MCF 10A (cell line): ENCODE measurements at regions of chr17 and their contacts with region 1.

Region 1: GRCh38 chr17:28661635-28662537 is at the starts of genes SDF2 and SUPT6H:
- DNase-seq: peak; percentile 86
- H3K4me3 Mint-ChIP-seq: peak within 1 kb of the TSS; percentile 88
- H3K27ac Mint-ChIP-seq: peak within 1 kb of the TSS; percentile 96
- H3K4me1 Mint-ChIP-seq: peaks cover 46% of the 10 kb centered on the region
- H3K27me3 Mint-ChIP-seq: no peaks in the 10 kb centered on the region
- CTCF ChIP-seq: no peak
- total RNA-seq, gene SDF2: 31.4 and 31.8 TPM in 2 replicates
- total RNA-seq, gene SUPT6H: 81.7 and 86.4 TPM in 2 replicates

Region 2: DNA sequence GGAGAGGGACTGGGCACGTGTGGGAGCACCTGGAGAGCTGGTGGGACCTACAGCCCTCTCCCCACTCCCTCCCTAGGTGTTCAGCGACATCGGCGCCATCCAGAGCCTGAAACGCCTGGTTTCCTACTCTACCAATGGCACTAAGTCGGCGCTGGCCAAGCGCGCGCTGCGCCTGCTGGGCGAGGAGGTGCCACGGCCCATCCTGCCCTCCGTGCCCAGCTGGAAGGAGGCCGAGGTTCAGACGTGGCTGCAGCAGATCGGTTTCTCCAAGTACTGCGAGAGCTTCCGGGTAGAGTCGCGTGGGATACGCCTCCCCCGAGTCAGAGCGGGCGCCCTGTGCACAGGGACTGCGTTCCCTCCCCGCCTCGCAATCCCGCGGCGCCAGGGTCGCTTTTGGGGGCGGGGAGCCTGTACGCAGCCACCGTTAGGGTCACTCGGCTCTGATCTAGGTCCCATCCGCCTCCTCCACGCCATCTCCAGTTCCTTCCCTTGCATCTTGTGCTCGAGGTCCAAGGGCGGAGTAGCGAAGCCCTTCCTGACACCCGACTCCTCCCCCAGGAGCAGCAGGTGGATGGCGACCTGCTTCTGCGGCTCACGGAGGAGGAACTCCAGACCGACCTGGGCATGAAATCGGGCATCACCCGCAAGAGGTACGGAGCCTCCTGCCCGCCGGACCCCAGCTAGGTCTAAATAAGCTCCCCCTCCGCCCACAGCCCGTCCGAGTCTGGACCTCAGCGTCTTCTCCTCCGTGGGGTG is 277.4 kb before region 1 on chr17:
- CTCF ChIA-PET with region 1: no interaction called
- POLR2A ChIA-PET with region 1: no interaction called
- intact Hi-C with region 1: no loop called
- DNase-seq: no peak
- H3K4me3 Mint-ChIP-seq: no peak overlapping the region
- H3K27ac Mint-ChIP-seq: no peak overlapping the region
- H3K4me1 Mint-ChIP-seq: peaks cover 13% of the 10 kb centered on the region
- H3K27me3 Mint-ChIP-seq: no peaks in the 10 kb centered on the region
- CTCF ChIP-seq: no peak

Region 3: DNA sequence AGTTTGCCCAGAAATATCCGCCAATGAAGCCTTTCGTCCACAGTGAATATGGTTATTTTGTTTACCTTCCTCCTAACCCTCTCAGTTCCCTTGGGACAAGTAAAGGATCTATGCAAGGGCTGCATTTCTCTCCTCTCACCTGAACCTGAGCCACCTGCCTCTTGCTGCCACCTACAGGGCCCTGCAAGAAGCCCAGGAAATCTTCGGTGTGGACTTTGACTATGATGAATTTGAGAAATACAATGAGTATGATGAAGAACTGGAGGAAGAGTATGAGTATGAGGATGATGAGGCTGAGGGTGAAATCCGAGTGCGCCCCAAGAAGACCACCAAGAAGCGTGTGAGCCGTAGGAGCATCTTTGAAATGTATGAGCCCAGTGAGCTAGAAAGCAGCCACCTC is 14.1 kb after region 1 on chr17:
- CTCF ChIA-PET with region 1: interaction called, 6 read pairs
- POLR2A ChIA-PET with region 1: interaction called, 28 read pairs
- intact Hi-C with region 1: no loop called
- DNase-seq: peak; percentile 43
- H3K4me3 Mint-ChIP-seq: no peak overlapping the region
- H3K27ac Mint-ChIP-seq: no peak overlapping the region
- H3K4me1 Mint-ChIP-seq: no peaks in the 10 kb centered on the region
- H3K27me3 Mint-ChIP-seq: no peaks in the 10 kb centered on the region
- CTCF ChIP-seq: no peak

Region 4: DNA sequence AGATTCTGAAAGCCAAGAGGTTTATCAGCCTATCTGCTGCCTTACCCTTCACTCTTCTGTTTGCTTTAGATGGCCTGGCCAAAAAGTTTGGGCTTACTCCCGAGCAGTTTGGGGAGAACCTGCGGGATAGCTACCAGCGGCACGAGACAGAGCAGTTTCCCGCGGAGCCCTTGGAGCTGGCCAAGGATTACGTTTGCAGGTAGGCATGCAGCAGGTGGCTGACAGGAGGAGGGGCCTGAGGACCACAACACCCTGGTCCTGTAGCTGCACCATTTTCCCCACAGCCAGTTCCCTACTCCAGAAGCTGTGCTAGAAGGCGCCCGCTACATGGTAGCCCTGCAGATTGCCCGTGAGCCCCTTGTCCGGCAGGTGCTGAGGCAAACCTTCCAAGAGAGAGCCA is 20.8 kb after region 1 on chr17:
- CTCF ChIA-PET with region 1: interaction called, 3 read pairs
- POLR2A ChIA-PET with region 1: interaction called, 28 read pairs
- intact Hi-C with region 1: no loop called
- DNase-seq: no peak
- H3K4me3 Mint-ChIP-seq: no peak overlapping the region
- H3K27ac Mint-ChIP-seq: no peak overlapping the region
- H3K4me1 Mint-ChIP-seq: no peaks in the 10 kb centered on the region
- H3K27me3 Mint-ChIP-seq: no peaks in the 10 kb centered on the region
- CTCF ChIP-seq: no peak

Region 5: GRCh38 chr17:28710861-28711722 is 49.2 kb after region 1 on chr17:
- CTCF ChIA-PET with region 1: no interaction called
- POLR2A ChIA-PET with region 1: interaction called, 17 read pairs
- intact Hi-C with region 1: no loop called
- DNase-seq: peak; percentile 83
- H3K4me3 Mint-ChIP-seq: peak overlapping the region; percentile 71
- H3K27ac Mint-ChIP-seq: peak overlapping the region; percentile 72
- H3K4me1 Mint-ChIP-seq: peaks cover 28% of the 10 kb centered on the region
- H3K27me3 Mint-ChIP-seq: no peaks in the 10 kb centered on the region
- CTCF ChIP-seq: no peak

Region 6: GRCh38 chr17:28717578-28718333 is 55.9 kb after region 1 on chr17 and contains the start of gene RAB34:
- CTCF ChIA-PET with region 1: interaction called, 3 read pairs
- POLR2A ChIA-PET with region 1: interaction called, 72 read pairs
- intact Hi-C with region 1: no loop called
- DNase-seq: peak; percentile 90
- H3K4me3 Mint-ChIP-seq: peak within 1 kb of the TSS; percentile 91
- H3K27ac Mint-ChIP-seq: peak within 1 kb of the TSS; percentile 97
- H3K4me1 Mint-ChIP-seq: peaks cover 31% of the 10 kb centered on the region
- H3K27me3 Mint-ChIP-seq: no peaks in the 10 kb centered on the region
- CTCF ChIP-seq: peak; percentile 26
- total RNA-seq, gene RAB34: 90.0 and 105 TPM in 2 replicates

Region 7: GRCh38 chr17:28743225-28744103 is 81.6 kb after region 1 on chr17 and contains the start of gene TRAF4:
- CTCF ChIA-PET with region 1: no interaction called
- POLR2A ChIA-PET with region 1: interaction called, 19 read pairs
- intact Hi-C with region 1: no loop called
- DNase-seq: peak; percentile 97
- H3K4me3 Mint-ChIP-seq: peak within 1 kb of the TSS; percentile 91
- H3K27ac Mint-ChIP-seq: peak within 1 kb of the TSS; percentile 93
- H3K4me1 Mint-ChIP-seq: peaks cover 13% of the 10 kb centered on the region
- H3K27me3 Mint-ChIP-seq: no peaks in the 10 kb centered on the region
- CTCF ChIP-seq: no peak
- total RNA-seq, gene TRAF4: 106 and 126 TPM in 2 replicates

Region 8: GRCh38 chr17:28783161-28783560 is 121.3 kb after region 1 on chr17:
- CTCF ChIA-PET with region 1: no interaction called
- POLR2A ChIA-PET with region 1: no interaction called
- intact Hi-C with region 1: no loop called
- DNase-seq: no peak
- H3K4me3 Mint-ChIP-seq: no peak overlapping the region
- H3K27ac Mint-ChIP-seq: no peak overlapping the region
- H3K4me1 Mint-ChIP-seq: peaks cover under 1% of the 10 kb centered on the region
- H3K27me3 Mint-ChIP-seq: no peaks in the 10 kb centered on the region
- CTCF ChIP-seq: no peak